ENCODE measurements at regions of chr4 and their contacts with region 1.

Region 1: DNA sequence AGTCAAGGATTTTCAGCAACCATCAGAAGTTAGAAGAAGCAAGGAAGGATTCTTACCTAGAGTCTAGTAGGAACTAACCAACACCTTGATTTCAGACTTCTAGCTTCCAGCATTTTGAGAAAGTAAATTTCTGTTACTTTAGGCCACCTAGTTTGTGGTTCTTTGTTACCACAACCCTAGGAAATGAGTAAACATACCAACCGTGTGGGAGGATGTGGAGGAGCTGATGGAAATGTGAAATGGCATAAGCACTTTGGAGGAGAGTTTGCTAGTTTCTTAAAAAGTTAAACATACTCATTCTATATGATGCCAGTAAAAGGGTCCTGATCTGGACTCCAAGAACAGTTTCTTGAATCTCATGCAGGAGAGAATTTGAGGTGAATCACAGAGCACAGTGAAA is 679.4 kb downstream of the PDHA2 start:
- H3K4me3 Mint-ChIP-seq: no peak overlapping the region
- H3K27ac Mint-ChIP-seq: no peak overlapping the region
- H3K4me1 Mint-ChIP-seq: no peaks in the 10 kb centered on the region
- H3K27me3 Mint-ChIP-seq: no peaks in the 10 kb centered on the region

Region 2: GRCh38 chr4:96390402-96390801 is 128.9 kb before region 1 on chr4:
- intact Hi-C with region 1: no loop called
- H3K4me3 Mint-ChIP-seq: no peak overlapping the region
- H3K27ac Mint-ChIP-seq: no peak overlapping the region
- H3K4me1 Mint-ChIP-seq: no peaks in the 10 kb centered on the region
- H3K27me3 Mint-ChIP-seq: no peaks in the 10 kb centered on the region

Region 3: DNA sequence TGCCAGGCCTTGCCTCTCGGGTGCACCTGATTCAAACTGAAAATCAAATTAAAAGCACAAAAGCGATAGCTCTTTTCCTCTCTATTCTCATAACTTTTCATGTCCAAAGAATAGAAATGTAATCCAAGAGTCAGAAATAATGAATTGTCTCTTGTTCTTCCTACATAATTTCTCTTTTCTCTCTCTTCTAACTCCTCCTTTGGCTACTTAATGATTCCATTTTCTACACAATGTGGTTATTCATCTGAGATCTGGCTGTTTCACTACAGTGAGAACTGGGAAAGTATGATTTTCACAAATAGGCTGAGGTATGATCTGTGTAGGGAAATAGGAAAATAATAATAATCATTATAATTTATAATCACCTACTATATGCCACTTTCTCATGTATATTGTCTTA is 24.1 kb after region 1 on chr4:
- intact Hi-C with region 1: loop called (anchors 1 kb)
- H3K4me3 Mint-ChIP-seq: no peak overlapping the region
- H3K27ac Mint-ChIP-seq: no peak overlapping the region
- H3K4me1 Mint-ChIP-seq: no peaks in the 10 kb centered on the region
- H3K27me3 Mint-ChIP-seq: no peaks in the 10 kb centered on the region

Region 4: GRCh38 chr4:96767815-96768480 is 248.7 kb after region 1 on chr4:
- intact Hi-C with region 1: no loop called
- H3K4me3 Mint-ChIP-seq: no peak overlapping the region
- H3K27ac Mint-ChIP-seq: no peak overlapping the region
- H3K4me1 Mint-ChIP-seq: no peaks in the 10 kb centered on the region
- H3K27me3 Mint-ChIP-seq: no peaks in the 10 kb centered on the region